Prostate gland (tissue), 2 donors: ENCODE measurements at regions of chr2 and their contacts with region 1.

Region 1: DNA sequence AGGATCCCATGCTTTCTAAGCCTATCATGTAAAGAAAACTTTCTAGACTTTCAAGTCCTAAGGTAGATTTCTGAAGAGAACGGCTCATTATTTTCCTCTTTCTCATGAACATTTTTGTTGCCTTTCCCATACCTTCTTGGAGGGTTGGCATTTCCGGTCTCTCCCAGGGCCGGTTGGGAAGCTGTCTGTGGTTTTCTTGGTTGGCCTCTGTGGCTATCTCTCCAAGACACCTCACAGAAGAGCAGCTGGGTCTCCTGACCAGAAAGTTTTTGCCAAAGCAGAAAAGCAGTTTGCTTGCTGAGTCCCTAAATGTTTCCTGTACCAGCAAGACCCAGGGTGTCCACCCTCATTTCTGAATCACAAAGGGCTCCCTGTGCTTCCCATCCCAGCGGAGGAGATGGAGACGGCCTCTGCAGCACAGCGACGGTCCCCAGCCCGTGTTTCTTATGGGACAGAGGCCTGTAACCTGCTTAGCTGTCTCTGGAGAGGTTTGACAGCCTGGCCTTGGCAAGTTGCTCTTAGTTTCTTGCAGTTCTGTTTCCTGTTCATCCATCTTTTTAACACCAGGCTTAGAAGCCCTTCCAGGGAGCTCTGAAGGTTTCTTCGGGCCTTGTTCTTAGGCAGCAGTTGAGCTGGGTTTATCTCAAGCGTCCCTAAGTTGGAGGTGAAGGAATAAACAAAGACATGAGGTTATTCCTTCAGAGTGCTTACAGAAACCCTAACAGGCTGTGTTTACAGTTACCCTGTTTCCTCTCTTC is 39.8 kb downstream of the GREB1 start:
- DNase-seq: no peak
- H3K4me3 ChIP-seq: no peak overlapping the region
- H3K27ac ChIP-seq: peak overlapping the region; percentile 46 to 63
- H3K4me1 ChIP-seq: peaks cover 20% of the 10 kb centered on the region
- H3K27me3 ChIP-seq: no peaks in the 10 kb centered on the region
- CTCF ChIP-seq: no peak
- POLR2A ChIP-seq: no peak

Region 2: GRCh38 chr2:11539317-11540152 is 34.1 kb before region 1 on chr2:
- intact Hi-C with region 1: loop called (anchors 5 kb)
- DNase-seq: peak; percentile 94
- H3K4me3 ChIP-seq: peak overlapping the region; percentile 34 to 45
- H3K27ac ChIP-seq: peak overlapping the region; percentile 87 to 88
- H3K4me1 ChIP-seq: peaks cover 3% of the 10 kb centered on the region
- H3K27me3 ChIP-seq: no peaks in the 10 kb centered on the region
- CTCF ChIP-seq: no peak
- POLR2A ChIP-seq: no peak